Endothelial cell of umbilical vein (primary cell): ENCODE measurements at regions of chr10 and their contacts with region 1.

Region 1: GRCh38 chr10:51063659-51064535 is 10.4 kb upstream of the PRKG1 start:
- DNase-seq: peak; percentile 62
- H3K4me3 ChIP-seq: no peak overlapping the region
- H3K27ac ChIP-seq: no peak overlapping the region
- H3K4me1 ChIP-seq: no peaks in the 10 kb centered on the region
- H3K27me3 ChIP-seq: no peaks in the 10 kb centered on the region
- CTCF ChIP-seq: peak; percentile 31 to 41
- POLR2A ChIP-seq: no peak

Region 2: GRCh38 chr10:51074238-51075028 is 10.5 kb after region 1 on chr10 and contains the start of gene PRKG1:
- CTCF ChIA-PET with region 1: interaction called, 14 read pairs
- POLR2A ChIA-PET with region 1: no interaction called
- dilution Hi-C with region 1: no loop called
- intact Hi-C with region 1: no loop called
- DNase-seq: peak; percentile 66
- H3K4me3 ChIP-seq: peak within 1 kb of the TSS; percentile 21 to 62 (median 61)
- H3K27ac ChIP-seq: no peak within 1 kb of the TSS
- H3K4me1 ChIP-seq: peaks cover 5% of the 10 kb centered on the region
- H3K27me3 ChIP-seq: peaks cover 24 to 38% of the 10 kb centered on the region in 2 experiments
- CTCF ChIP-seq: no peak
- POLR2A ChIP-seq: no peak
- total RNA-seq, gene PRKG1: 0.18 and 0.39 TPM in 2 replicates

Region 3: GRCh38 chr10:51103554-51104217 is 39.8 kb after region 1 on chr10:
- CTCF ChIA-PET with region 1: no interaction called
- POLR2A ChIA-PET with region 1: no interaction called
- dilution Hi-C with region 1: no loop called
- intact Hi-C with region 1: no loop called
- DNase-seq: peak; percentile 45
- H3K4me3 ChIP-seq: no peak overlapping the region
- H3K27ac ChIP-seq: no peak overlapping the region
- H3K4me1 ChIP-seq: peaks cover 6% of the 10 kb centered on the region
- H3K27me3 ChIP-seq: no peaks in the 10 kb centered on the region
- CTCF ChIP-seq: no peak
- POLR2A ChIP-seq: no peak

Region 4: DNA sequence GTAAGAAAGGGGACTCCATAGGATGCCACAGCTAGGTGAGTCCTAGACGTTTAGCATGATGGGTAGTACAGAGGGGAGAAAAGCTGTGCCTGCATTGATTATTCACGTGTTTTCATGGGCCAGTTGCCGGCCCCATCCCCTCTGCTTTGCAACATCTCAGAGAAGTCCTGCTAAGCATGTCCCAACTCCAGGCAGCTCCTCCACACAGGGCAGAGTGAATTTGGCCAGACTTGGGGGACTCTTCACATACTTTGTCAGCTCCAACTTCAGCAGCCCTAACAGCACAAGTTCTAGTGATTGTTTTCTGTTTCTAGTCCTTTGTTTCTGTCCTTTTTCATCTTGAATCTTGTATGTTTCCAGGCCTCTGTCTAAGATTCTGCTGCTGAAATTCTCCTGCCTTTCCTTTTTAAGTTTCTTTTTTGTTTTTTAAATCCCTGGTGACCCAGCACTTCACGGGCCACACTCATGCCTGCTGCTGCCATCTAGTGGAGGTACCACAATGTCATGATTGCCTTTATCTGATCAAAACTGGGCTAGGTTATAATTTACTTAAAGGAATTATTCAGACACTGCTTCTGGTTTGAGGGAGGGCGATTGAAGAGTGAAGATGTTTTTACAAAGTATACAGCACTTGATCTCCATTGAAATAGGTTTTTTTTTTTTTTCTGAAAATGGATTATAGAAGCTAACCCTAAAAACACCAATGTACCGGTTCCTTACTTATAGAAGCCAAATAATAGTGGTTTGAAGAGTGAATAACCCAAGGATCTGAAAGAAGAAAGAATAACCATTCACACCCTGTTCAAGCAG is 358.6 kb after region 1 on chr10:
- CTCF ChIA-PET with region 1: interaction called, 86 read pairs
- POLR2A ChIA-PET with region 1: no interaction called
- dilution Hi-C with region 1: no loop called
- intact Hi-C with region 1: loop called (anchors 1 kb)
- DNase-seq: peak; percentile 72
- H3K4me3 ChIP-seq: no peak overlapping the region
- H3K27ac ChIP-seq: no peak overlapping the region
- H3K4me1 ChIP-seq: peaks cover 6% of the 10 kb centered on the region
- H3K27me3 ChIP-seq: no peaks in the 10 kb centered on the region
- CTCF ChIP-seq: peak; percentile 62 to 70
- POLR2A ChIP-seq: no peak

Region 5: GRCh38 chr10:51960494-51960895 is 896.6 kb after region 1 on chr10:
- CTCF ChIA-PET with region 1: interaction called, 10 read pairs
- POLR2A ChIA-PET with region 1: no interaction called
- dilution Hi-C with region 1: no loop called
- intact Hi-C with region 1: loop called (anchors 1 kb)
- DNase-seq: peak; percentile 52
- H3K4me3 ChIP-seq: no peak overlapping the region
- H3K27ac ChIP-seq: no peak overlapping the region
- H3K4me1 ChIP-seq: no peaks in the 10 kb centered on the region
- H3K27me3 ChIP-seq: no peaks in the 10 kb centered on the region
- CTCF ChIP-seq: peak; percentile 33 to 34
- POLR2A ChIP-seq: no peak

Region 6: GRCh38 chr10:52215745-52216361 is 1152.0 kb after region 1 on chr10:
- CTCF ChIA-PET with region 1: interaction called, 6 read pairs
- POLR2A ChIA-PET with region 1: no interaction called
- dilution Hi-C with region 1: no loop called
- intact Hi-C with region 1: loop called (anchors 2 kb)
- DNase-seq: peak; percentile 79
- H3K4me3 ChIP-seq: no peak overlapping the region
- H3K27ac ChIP-seq: no peak overlapping the region
- H3K4me1 ChIP-seq: no peaks in the 10 kb centered on the region
- H3K27me3 ChIP-seq: no peaks in the 10 kb centered on the region
- CTCF ChIP-seq: peak; percentile 51 to 57
- POLR2A ChIP-seq: no peak